GM12878 (cell line): ENCODE measurements at regions of chr2 and their contacts with region 1.

Region 1: DNA sequence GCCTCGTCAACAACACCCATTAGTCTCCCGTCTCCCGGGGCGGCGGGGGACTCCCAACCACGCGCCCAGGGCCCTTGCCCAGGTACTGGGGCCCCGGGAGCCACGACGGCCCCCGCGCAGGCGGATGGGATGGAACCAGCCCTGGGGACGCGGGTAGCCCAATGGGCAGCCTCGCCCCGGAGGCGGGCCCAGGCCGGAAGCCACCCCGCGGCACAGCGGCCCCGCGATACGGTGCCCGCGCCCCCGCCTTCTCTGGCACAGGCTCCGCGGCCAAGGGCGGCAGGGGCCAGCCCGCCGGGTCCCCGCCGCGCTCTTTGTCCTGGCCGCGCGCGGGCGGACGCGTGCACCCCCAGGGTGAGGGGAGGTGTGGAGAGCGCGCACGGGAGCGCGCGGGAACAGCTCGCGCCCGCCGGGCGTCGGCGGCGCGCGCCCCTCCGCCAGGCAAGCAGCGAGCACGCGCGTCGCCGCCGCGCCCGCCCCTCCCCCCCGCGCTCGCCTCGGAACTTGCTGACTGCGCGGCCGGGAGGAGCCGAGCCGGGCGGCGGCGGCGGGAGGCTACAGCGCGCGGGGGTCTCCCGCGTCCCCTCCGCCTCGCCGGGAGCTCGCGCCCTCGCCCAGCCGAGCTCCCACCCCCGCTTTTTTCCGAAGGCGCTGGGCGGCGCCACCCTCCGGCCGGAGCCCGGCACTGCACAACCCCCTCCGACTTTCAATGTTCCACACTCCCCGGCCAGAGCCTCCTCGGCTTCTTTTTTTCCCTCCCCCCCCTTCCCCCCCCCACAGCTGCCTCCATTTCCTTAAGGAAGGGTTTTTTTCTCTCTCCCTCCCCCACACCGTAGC is at the start of gene UBE2E3:
- DNase-seq: no peak
- ATAC-seq: peak; percentile 87
- H3K4me3 ChIP-seq: peak within 1 kb of the TSS; percentile 76
- H3K27ac ChIP-seq: 0 out of 2 replicates have a peak within 1 kb of the TSS, but pooled peaks have one; percentile 10
- H3K4me1 ChIP-seq: peaks cover 8% of the 10 kb centered on the region
- H3K27me3 ChIP-seq: no peaks in the 10 kb centered on the region; a peak in 1 of 4 replicates
- CTCF ChIP-seq: peak; percentile 55 to 82 (median 64)
- EP300 ChIP-seq: no peak
- POLR2A ChIP-seq: peak; percentile 70; the same call in 1 of the 2 replicates
- RAD21 ChIP-seq: peak; percentile 50
- polyA plus RNA-seq, gene UBE2E3: 14.9 to 22.7 TPM

Region 2: GRCh38 chr2:180006781-180007579 is 973.3 kb before region 1 on chr2 and contains the start of gene CWC22:
- CTCF ChIA-PET with region 1: no interaction called
- POLR2A ChIA-PET with region 1: no interaction called
- RAD21 ChIA-PET with region 1: no interaction called
- SMC1A ChIA-PET with region 1: no interaction called
- in situ Hi-C with region 1: no loop called
- intact Hi-C with region 1: loop called (anchors 5 kb)
- DNase-seq: peak; percentile 91
- ATAC-seq: peak; percentile 93
- H3K4me3 ChIP-seq: peak within 1 kb of the TSS; percentile 89
- H3K27ac ChIP-seq: peak within 1 kb of the TSS; percentile 98
- H3K4me1 ChIP-seq: peaks cover 5% of the 10 kb centered on the region
- H3K27me3 ChIP-seq: no peaks in the 10 kb centered on the region
- CTCF ChIP-seq: no peak
- EP300 ChIP-seq: no peak
- POLR2A ChIP-seq: peak; percentile 88
- RAD21 ChIP-seq: no peak
- polyA plus RNA-seq, gene CWC22: 26.4 to 29.5 TPM

Region 3: GRCh38 chr2:180962791-180963190 is 17.5 kb before region 1 on chr2:
- CTCF ChIA-PET with region 1: interaction called, 14 read pairs
- POLR2A ChIA-PET with region 1: interaction called, 6 read pairs
- RAD21 ChIA-PET with region 1: interaction called, 6 read pairs
- SMC1A ChIA-PET with region 1: interaction called, 3 read pairs
- in situ Hi-C with region 1: no loop called
- intact Hi-C with region 1: no loop called
- DNase-seq: no peak
- ATAC-seq: no peak; the same call in 2 of the 3 replicates
- H3K4me3 ChIP-seq: no peak overlapping the region
- H3K27ac ChIP-seq: no peak overlapping the region
- H3K4me1 ChIP-seq: no peaks in the 10 kb centered on the region
- H3K27me3 ChIP-seq: peaks cover 0 to 2% of the 10 kb centered on the region in 2 experiments; a peak in 1 of 4 replicates
- CTCF ChIP-seq: no peak
- EP300 ChIP-seq: no peak
- POLR2A ChIP-seq: no peak
- RAD21 ChIP-seq: no peak

Region 4: DNA sequence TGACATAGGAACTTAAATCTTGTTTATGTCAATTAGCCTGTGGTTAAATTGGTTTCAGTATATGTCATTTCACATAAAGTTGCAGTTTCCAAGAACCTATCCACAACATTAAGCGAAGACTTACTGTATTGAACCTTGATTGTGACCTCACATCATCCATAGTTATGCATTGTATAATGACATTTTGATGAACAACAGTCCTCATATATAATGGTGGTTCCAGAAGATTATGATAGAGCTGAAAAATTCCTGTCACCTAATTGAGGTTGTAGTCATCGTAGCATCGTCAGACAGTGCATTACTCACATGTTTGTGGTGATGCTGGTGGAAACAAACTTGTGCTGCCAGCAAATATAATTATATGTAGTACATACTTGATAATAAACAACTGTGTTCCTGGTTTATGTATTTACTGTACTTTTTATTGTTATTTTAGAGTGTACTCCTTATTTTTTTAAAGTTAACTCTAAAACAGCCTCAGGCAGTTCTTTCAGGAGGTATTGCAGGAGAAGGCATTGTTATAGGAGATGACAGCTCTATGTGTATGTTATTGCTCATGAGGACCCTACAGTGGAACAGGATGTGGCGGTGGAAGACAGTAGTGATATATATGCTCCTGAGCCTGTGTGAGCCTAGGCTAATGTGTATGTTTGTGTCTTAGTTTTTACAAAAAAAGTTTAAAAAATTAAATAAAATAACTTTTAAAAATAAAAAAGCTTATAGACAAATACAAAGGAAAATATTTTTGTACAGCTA is 56.7 kb after region 1 on chr2:
- CTCF ChIA-PET with region 1: interaction called, 3 read pairs
- POLR2A ChIA-PET with region 1: no interaction called
- RAD21 ChIA-PET with region 1: no interaction called
- SMC1A ChIA-PET with region 1: no interaction called
- in situ Hi-C with region 1: no loop called
- intact Hi-C with region 1: loop called (anchors 5 kb)
- DNase-seq: no peak
- ATAC-seq: peak; percentile 82
- H3K4me3 ChIP-seq: no peak overlapping the region
- H3K27ac ChIP-seq: no peak overlapping the region
- H3K4me1 ChIP-seq: peaks cover 3% of the 10 kb centered on the region
- H3K27me3 ChIP-seq: no peaks in the 10 kb centered on the region
- CTCF ChIP-seq: no peak
- EP300 ChIP-seq: no peak
- POLR2A ChIP-seq: no peak
- RAD21 ChIP-seq: no peak

Region 5: DNA sequence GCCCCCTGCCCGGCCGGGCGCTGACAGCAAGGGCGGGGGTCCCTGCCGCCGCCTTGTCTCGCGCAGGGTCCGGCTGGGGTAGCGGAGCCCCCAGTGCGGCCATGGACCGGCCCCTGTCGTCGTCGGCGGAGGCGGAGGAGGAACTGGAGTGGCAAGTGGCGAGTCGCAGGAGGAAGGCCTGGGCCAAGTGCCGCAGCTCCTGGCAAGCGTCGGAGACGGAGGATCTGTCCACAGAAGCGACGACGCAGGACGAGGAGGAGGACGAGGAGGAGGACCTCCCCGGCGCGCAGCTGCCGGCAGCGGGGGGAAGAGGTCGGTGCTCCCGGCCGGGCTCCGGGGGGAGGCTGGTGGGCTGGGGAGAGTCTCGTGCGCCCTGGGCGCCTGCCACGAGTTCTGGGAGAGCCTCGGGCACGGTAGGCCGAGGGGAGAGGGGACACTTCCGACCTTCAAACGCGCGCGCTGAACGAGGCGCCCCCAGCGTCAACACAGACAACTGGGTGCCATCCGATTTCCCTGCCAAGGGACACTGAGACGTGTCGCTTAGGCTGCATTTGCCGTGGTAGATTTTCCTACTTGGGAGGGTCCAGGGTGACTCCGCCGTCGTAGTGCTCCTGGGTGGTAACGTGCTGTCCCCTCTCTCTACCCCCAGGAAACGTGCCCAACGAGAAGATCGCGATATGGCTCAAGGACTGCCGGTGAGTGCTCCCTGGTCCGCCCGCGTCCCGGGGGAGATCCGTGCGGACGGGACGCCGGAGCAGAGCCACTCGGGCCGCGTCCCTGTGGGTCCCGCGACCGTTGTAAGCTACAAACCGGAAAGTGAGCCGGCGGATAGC is 911.9 kb after region 1 on chr2:
- CTCF ChIA-PET with region 1: interaction called, 4 read pairs
- POLR2A ChIA-PET with region 1: no interaction called
- RAD21 ChIA-PET with region 1: no interaction called
- SMC1A ChIA-PET with region 1: no interaction called
- in situ Hi-C with region 1: no loop called
- intact Hi-C with region 1: loop called (anchors 2 kb)
- DNase-seq: no peak
- ATAC-seq: peak; percentile 82
- H3K4me3 ChIP-seq: peak overlapping the region; percentile 81
- H3K27ac ChIP-seq: peak overlapping the region; percentile 41
- H3K4me1 ChIP-seq: no peaks in the 10 kb centered on the region
- H3K27me3 ChIP-seq: no peaks in the 10 kb centered on the region
- CTCF ChIP-seq: peak; percentile 21 to 49 (median 40); a peak in 4 of 6 replicates
- EP300 ChIP-seq: no peak
- POLR2A ChIP-seq: peak; percentile 61
- RAD21 ChIP-seq: no peak